GM23248 (cell line): ENCODE measurements at regions of chr5 and their contacts with region 1.

Region 1: DNA sequence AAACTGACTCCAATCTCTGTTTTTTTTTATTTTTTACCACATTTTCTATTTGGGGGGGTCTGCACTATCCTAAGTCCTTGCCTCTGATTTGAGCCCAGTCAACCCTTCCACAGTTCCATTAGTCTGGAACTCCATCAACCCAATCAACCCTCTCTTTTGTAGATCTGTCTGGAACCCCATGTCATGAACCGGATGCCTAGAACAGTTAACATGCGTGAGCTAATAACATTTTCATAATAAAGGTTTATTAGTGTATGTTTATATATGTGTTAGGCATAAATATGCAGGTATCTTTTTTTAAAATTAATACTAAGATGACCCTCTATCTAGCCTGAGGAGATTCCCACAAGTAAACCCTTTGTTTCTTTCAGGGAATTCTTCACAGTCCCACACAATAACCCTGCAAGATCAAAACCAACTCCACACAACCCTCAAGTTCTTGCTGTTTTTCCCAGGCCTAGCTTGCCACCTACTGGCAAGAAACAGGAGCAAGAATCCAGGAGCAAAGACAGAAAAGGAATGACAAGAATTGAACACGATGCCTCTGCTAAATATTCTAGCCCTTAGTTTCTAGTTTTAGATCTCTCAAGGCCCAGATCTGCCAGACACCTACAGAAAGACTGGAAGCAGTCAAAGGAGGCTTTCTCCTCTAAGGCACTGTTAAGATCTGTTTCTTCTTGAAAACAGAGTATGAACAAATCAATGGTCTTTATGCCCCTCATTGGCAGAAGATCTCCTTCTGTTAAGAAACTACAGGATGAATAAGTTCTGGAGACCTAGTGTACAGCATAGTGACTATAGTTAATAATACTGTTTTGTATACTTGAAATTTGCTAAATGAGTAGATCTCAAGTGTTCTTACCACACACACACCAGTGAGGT is 100.4 kb downstream of the TRIM36 start:
- DNase-seq: peak; percentile 61
- H3K4me3 ChIP-seq: no peak overlapping the region
- H3K27ac ChIP-seq: no peak overlapping the region
- H3K4me1 ChIP-seq: no peaks in the 10 kb centered on the region
- H3K27me3 ChIP-seq: no peaks in the 10 kb centered on the region; the same call in 1 of the 2 replicates

Region 2: DNA sequence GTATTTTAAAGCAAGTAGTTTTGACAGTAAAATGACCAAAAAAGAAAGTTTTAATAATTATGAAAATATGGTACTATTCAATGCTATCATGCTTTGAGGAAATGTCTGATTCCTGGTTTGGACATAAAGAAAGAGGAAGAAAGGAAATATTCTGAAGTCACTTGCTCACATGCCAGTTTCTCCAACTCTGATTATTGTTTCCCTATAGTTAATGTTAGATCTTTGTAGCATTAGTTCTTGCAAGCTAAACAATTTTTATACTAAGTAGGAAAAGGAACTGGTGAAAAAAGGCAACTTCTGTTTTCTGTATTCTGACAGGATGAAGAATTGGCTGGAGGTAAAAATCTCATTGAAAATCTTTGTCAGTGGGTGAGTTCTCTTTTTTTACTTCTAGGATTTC is 1436.3 kb before region 1 on chr5:
- in situ Hi-C with region 1: loop called (anchors 25 kb)
- DNase-seq: no peak
- H3K4me3 ChIP-seq: no peak overlapping the region
- H3K27ac ChIP-seq: no peak overlapping the region
- H3K4me1 ChIP-seq: no peaks in the 10 kb centered on the region
- H3K27me3 ChIP-seq: 0 out of 2 replicates have a peak, but pooled peaks cover 4% of the 10 kb centered on the region